CD8-positive, alpha-beta memory T cell (primary cell): ENCODE measurements at regions of chr10 and their contacts with region 1.

Region 1: DNA sequence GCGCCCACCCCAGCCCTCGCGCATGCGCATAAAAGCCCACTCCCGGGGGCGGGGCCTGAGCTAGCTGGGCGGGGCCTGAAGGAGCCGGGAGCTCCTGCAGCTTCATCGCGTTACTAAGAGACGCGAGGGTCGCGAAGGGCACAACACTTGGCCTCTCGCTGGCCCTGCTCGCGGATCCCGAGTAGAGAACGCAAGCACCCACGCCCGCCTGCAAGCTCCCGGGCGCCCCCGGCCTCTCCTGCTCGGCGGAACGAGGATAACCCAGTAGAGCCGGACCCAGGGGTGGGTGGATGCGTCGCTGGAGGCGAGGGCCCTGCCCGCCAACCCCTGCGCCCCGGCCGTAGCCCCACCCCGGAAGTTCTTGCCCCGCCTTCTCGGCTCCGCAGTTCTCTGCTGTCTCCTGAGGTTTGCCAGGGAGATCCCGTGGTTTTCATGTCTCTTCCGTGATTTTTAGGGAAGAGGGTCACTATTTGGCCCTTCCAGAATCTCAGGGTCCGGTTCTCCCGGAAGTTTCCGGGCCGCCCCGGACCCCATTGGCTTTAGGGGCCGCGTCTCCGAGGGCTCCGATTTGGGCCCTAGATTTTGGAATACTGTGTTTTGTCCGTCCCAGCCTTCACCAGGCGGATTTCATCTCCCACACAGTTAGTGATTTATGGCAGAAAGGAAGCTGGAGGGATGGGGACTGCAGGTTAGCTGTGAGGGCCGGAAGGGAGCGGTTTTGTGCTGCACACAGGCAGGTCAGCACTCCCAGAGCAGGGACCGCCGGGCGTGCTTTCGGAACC is at the start of gene MEIG1:
- DNase-seq: peak; percentile 86 to 97 (median 93)
- H3K4me3 ChIP-seq: peak within 1 kb of the TSS; percentile 98
- H3K4me3 Mint-ChIP-seq: peak within 1 kb of the TSS; percentile 92 to 99 (median 97)
- H3K27ac ChIP-seq: peak within 1 kb of the TSS; percentile 92
- H3K27ac Mint-ChIP-seq: peak within 1 kb of the TSS; percentile 94 to 99 (median 97)
- H3K4me1 ChIP-seq: peaks cover 12% of the 10 kb centered on the region
- H3K4me1 Mint-ChIP-seq: peaks cover 24 to 40% (median 27%) of the 10 kb centered on the region in 3 donors
- H3K27me3 ChIP-seq: no peaks in the 10 kb centered on the region
- H3K27me3 Mint-ChIP-seq: no peaks in the 10 kb centered on the region
- total RNA-seq, gene MEIG1: 0.91 to 1.2 TPM

Region 2: DNA sequence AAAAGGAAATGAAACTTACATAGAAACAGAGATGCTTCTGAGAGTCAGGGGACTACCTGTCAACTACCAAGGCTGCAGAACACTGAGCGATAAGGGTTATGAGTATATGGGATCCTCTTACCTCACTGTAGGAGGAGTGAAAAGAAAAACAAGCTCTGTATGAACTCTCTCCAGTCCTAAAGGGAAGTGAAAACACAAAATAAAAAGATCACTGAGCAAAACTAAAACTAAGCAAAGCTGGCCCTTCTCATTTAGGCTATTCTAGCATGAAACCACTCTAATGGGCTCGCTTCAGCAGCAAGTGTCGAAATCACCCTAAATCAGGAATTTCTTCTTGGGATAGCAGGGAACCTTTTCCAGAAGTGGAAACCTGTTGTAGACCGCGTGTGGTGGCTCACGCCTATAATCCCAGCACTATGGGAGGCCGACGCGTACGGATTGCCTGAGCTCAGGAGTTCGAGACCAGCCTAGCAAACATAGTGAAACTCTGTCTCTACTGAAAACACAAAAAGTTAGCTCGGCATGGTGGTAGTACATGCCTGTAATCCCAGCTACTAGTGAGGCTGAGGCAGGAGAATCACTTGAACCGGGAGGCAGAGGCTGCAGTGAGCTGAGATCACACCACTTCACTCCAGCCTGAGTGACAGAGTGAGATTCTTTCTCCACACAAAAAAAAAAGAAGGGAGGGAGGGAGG is 32.6 kb before region 1 on chr10:
- CTCF ChIA-PET with region 1: interaction called, 3 read pairs
- POLR2A ChIA-PET with region 1: interaction called, 12 read pairs
- DNase-seq: no peak
- H3K4me3 ChIP-seq: no peak overlapping the region
- H3K4me3 Mint-ChIP-seq: no peak overlapping the region
- H3K27ac ChIP-seq: no peak overlapping the region
- H3K27ac Mint-ChIP-seq: peak overlapping the region in 3 of 8 donors; percentile 22 to 76 (median 61)
- H3K4me1 ChIP-seq: no peaks in the 10 kb centered on the region
- H3K4me1 Mint-ChIP-seq: peaks cover 0 to 1% (median 0%) of the 10 kb centered on the region in 3 donors
- H3K27me3 ChIP-seq: no peaks in the 10 kb centered on the region
- H3K27me3 Mint-ChIP-seq: no peaks in the 10 kb centered on the region

Region 3: GRCh38 chr10:14945091-14945490 is 14.4 kb before region 1 on chr10:
- CTCF ChIA-PET with region 1: no interaction called
- POLR2A ChIA-PET with region 1: no interaction called
- DNase-seq: no peak
- H3K4me3 ChIP-seq: no peak overlapping the region
- H3K4me3 Mint-ChIP-seq: no peak overlapping the region
- H3K27ac ChIP-seq: no peak overlapping the region
- H3K27ac Mint-ChIP-seq: no peak overlapping the region
- H3K4me1 ChIP-seq: no peaks in the 10 kb centered on the region
- H3K4me1 Mint-ChIP-seq: peaks cover 14 to 23% (median 21%) of the 10 kb centered on the region in 3 donors
- H3K27me3 ChIP-seq: no peaks in the 10 kb centered on the region
- H3K27me3 Mint-ChIP-seq: no peaks in the 10 kb centered on the region

Region 4: GRCh38 chr10:14995964-14996565 is 36.6 kb after region 1 on chr10:
- CTCF ChIA-PET with region 1: no interaction called
- POLR2A ChIA-PET with region 1: no interaction called
- DNase-seq: no peak
- H3K4me3 ChIP-seq: no peak overlapping the region
- H3K4me3 Mint-ChIP-seq: no peak overlapping the region
- H3K27ac ChIP-seq: no peak overlapping the region
- H3K27ac Mint-ChIP-seq: no peak overlapping the region
- H3K4me1 ChIP-seq: no peaks in the 10 kb centered on the region
- H3K4me1 Mint-ChIP-seq: peaks cover 0 to 7% (median 2%) of the 10 kb centered on the region in 3 donors
- H3K27me3 ChIP-seq: no peaks in the 10 kb centered on the region
- H3K27me3 Mint-ChIP-seq: peaks cover 3 to 14% of the 10 kb centered on the region in 2 donors